ENCODE measurements at regions of chr12 and their contacts with region 1.

Region 1: GRCh38 chr12:83005534-83006197 is 319.0 kb downstream of the TMTC2 start:
- DNase-seq: no peak
- ATAC-seq: no peak
- H3K4me3 ChIP-seq: no peak overlapping the region
- H3K27ac ChIP-seq: no peak overlapping the region
- H3K4me1 ChIP-seq: no peaks in the 10 kb centered on the region
- H3K27me3 ChIP-seq: no peaks in the 10 kb centered on the region
- CTCF ChIP-seq: no peak
- EP300 ChIP-seq: no peak
- POLR2A ChIP-seq: no peak
- RAD21 ChIP-seq: no peak

Region 2: GRCh38 chr12:82942991-82943401 is 62.7 kb before region 1 on chr12:
- CTCF ChIA-PET with region 1: no interaction called
- POLR2A ChIA-PET with region 1: no interaction called
- in situ Hi-C with region 1: no loop called
- intact Hi-C with region 1: no loop called
- DNase-seq: no peak
- ATAC-seq: no peak
- H3K4me3 ChIP-seq: no peak overlapping the region
- H3K27ac ChIP-seq: no peak overlapping the region
- H3K4me1 ChIP-seq: no peaks in the 10 kb centered on the region
- H3K27me3 ChIP-seq: no peaks in the 10 kb centered on the region; a peak in 1 of 5 replicates
- CTCF ChIP-seq: no peak
- EP300 ChIP-seq: no peak
- POLR2A ChIP-seq: no peak
- RAD21 ChIP-seq: no peak

Region 3: DNA sequence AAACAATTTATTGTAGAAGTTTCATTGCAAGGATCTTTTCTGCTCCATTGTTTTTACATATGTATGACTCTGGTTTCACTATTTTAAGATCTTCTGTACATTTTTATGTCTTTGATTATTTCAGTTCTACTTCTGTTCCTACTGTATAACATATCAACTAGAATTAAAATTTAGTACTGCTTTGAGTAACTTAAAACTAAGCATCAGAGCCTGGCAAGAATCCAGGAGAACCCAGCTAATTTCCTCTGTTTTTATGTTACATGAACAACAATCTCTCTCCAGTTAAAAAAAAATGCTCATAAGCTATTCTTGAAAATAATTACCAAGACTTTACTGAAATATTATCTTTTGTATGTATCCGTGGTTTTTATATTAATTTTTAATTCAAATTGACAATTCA is 51.8 kb after region 1 on chr12:
- CTCF ChIA-PET with region 1: no interaction called
- POLR2A ChIA-PET with region 1: no interaction called
- in situ Hi-C with region 1: no loop called
- intact Hi-C with region 1: no loop called
- DNase-seq: no peak
- ATAC-seq: no peak
- H3K4me3 ChIP-seq: no peak overlapping the region
- H3K27ac ChIP-seq: no peak overlapping the region
- H3K4me1 ChIP-seq: no peaks in the 10 kb centered on the region
- H3K27me3 ChIP-seq: no peaks in the 10 kb centered on the region
- CTCF ChIP-seq: no peak
- EP300 ChIP-seq: no peak
- POLR2A ChIP-seq: no peak
- RAD21 ChIP-seq: no peak

Region 4: DNA sequence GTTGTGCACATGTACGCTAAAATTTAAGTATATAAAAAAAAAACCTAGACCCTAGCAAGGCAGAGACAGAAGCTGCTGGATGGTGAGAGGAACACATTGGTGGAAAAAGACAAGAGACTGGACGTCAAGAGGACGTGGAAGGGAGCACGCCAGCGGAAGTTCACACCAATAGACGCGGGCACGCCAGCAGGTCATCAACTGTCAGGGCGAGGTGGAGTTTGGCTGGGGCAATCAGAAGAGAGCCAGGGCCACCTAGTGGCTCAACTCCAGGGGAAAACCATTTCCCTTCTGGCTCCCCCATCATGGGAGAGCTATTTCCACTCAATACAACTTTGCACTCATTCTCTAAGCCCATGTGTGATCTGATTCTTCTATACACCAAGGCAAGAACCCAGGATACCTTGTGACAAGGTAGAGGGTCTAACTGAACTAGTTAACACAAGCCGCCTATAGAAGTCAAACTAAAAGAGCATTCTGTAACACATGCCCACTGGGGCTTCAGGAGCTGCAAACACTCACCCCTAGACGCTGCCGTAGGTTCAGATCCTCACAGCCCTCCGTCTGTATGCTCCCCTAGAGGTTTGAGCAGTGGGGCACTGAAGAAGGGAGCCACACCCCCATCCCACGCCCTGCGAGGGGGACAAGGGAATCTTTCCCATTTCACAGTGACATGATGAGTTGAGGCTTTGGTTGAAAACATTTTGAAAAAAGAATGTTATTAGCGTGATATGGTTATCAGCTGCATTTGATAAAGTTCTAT is 383.8 kb after region 1 on chr12:
- CTCF ChIA-PET with region 1: no interaction called
- POLR2A ChIA-PET with region 1: no interaction called
- in situ Hi-C with region 1: no loop called
- intact Hi-C with region 1: loop called (anchors 2 kb)
- DNase-seq: no peak
- ATAC-seq: peak; percentile 37; the same call in 2 of the 3 replicates
- H3K4me3 ChIP-seq: no peak overlapping the region
- H3K27ac ChIP-seq: no peak overlapping the region
- H3K4me1 ChIP-seq: no peaks in the 10 kb centered on the region
- H3K27me3 ChIP-seq: no peaks in the 10 kb centered on the region
- CTCF ChIP-seq: peak; percentile 14; the same call in 1 of the 2 replicates
- EP300 ChIP-seq: no peak
- POLR2A ChIP-seq: no peak
- RAD21 ChIP-seq: no peak

Region 5: DNA sequence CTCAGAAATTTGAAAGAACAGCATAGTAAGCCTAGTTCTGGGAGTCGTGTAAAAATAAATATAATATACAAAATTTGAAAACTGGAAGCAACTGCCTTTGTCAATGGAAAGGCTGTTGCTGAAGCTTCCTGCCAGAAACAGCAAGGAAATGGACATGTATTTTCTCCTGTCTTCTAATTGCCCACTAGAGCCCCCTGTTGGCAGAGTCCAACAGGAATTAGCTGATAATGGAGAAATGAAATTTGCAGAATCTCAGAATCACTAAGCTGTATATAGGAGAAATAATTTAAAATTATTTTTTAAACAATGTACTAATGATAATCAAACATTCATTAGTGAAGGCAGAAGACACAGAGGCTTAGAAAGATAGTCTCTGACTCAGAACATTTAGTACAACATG is 1492.2 kb after region 1 on chr12:
- CTCF ChIA-PET with region 1: no interaction called
- POLR2A ChIA-PET with region 1: no interaction called
- in situ Hi-C with region 1: loop called (anchors 10 kb)
- intact Hi-C with region 1: loop called (anchors 1 kb)
- DNase-seq: peak; percentile 15
- ATAC-seq: peak; percentile 50; the same call in 1 of the 3 replicates
- H3K4me3 ChIP-seq: no peak overlapping the region
- H3K27ac ChIP-seq: no peak overlapping the region
- H3K4me1 ChIP-seq: no peaks in the 10 kb centered on the region
- H3K27me3 ChIP-seq: no peaks in the 10 kb centered on the region
- CTCF ChIP-seq: peak; percentile 44
- EP300 ChIP-seq: no peak
- POLR2A ChIP-seq: no peak
- RAD21 ChIP-seq: no peak

Region 6: DNA sequence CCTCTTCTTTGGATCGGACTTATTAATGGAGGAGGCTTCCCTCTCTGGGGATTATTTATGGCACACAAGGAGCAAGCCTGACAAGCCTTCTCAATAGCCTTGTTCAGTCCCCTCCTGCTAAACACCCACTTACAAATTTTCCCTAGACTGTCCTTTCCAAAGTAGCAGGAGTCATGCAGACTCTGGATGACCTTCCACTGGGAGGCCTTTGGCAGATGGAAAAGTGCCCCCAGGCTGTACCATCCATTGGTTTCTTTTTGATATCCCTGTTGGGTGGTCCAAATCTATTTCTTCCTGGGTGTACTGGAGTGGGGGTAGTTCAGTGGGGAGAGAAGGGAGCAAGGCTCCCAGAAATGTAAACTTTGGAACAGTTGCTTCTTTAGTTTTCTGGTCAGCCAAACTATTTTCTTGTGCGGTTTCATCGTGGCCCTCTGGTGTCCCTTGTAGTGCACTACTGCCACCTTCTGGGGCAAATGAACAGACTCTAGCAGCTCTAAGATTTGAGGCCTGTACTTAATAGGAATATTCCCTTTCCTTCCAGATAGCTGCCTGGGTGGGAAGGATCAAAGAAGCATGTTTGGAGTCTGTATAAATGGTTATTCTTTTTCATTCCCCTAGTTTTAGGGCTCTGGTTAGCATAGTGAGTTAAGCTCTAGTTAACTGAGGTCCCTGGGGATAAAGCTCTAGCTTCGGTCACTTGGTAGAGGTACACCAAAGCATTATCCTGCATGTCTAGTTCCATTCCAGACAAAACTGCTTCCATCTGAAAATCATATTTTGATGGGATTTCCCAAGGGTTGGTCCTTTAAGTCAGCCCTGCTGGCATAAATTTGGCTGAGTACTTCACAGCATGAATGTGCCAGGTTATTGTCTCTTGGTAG is 1497.5 kb after region 1 on chr12:
- CTCF ChIA-PET with region 1: no interaction called
- POLR2A ChIA-PET with region 1: no interaction called
- in situ Hi-C with region 1: loop called (anchors 10 kb)
- intact Hi-C with region 1: loop called (anchors 1 kb)
- DNase-seq: peak; percentile 16
- ATAC-seq: peak; percentile 97
- H3K4me3 ChIP-seq: no peak overlapping the region
- H3K27ac ChIP-seq: no peak overlapping the region
- H3K4me1 ChIP-seq: no peaks in the 10 kb centered on the region
- H3K27me3 ChIP-seq: no peaks in the 10 kb centered on the region
- CTCF ChIP-seq: peak; percentile 67
- EP300 ChIP-seq: no peak
- POLR2A ChIP-seq: no peak
- RAD21 ChIP-seq: peak; percentile 33; the same call in 1 of the 2 replicates

Region 7: GRCh38 chr12:84842406-84843013 is 1836.8 kb after region 1 on chr12:
- CTCF ChIA-PET with region 1: no interaction called
- POLR2A ChIA-PET with region 1: no interaction called
- in situ Hi-C with region 1: no loop called
- intact Hi-C with region 1: loop called (anchors 10 kb)
- DNase-seq: peak; percentile 16
- ATAC-seq: peak; percentile 31; the same call in 1 of the 3 replicates
- H3K4me3 ChIP-seq: no peak overlapping the region
- H3K27ac ChIP-seq: no peak overlapping the region
- H3K4me1 ChIP-seq: no peaks in the 10 kb centered on the region
- H3K27me3 ChIP-seq: no peaks in the 10 kb centered on the region
- CTCF ChIP-seq: peak; percentile 63
- EP300 ChIP-seq: no peak
- POLR2A ChIP-seq: no peak
- RAD21 ChIP-seq: no peak